ENCODE measurements at regions of chr6 and their contacts with region 1.

Region 1: DNA sequence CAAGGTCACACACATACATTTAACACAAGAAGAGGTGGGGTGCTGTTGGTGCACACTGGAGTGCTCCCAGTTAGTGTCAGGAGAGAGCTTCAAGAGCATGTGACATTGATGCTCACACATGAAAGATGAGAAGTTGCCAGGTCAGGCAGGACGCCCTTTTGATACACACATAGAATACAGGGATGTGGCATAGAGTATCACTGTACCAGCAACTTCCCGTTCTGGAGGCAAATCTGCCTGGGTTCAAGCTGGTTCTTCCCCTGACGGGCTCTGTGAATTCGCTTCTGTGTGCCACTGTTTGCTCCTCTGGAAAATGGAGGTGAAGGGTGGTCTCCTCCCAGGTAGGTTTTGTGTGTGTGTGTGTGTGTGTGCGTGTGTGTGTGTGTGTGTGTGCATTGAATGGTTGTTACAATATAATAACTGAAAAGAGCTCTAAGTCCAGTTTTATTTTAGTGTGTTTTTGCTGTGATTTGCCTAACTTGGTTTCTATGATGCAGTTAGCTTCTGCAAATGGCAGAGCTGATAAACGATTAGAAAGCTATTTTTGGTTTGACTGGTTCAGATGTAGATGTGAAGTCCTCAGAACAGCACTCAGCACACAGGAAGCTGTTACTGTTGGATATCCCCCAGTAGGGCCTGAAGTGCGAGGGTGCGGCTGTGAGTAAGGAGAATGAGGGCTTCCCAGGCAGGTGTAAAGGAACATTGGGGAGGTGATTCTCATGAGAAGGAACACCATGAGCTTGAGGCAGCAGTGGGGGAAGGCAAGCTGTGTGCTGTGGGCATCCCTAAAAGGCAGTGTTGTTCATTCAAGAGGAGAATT is 53.4 kb downstream of the HIVEP1 start:
- DNase-seq: no peak
- ATAC-seq: peak; percentile 27
- H3K4me3 Mint-ChIP-seq: no peak overlapping the region
- H3K27ac Mint-ChIP-seq: peak overlapping the region; percentile 68
- H3K4me1 Mint-ChIP-seq: peaks cover 47% of the 10 kb centered on the region
- H3K27me3 Mint-ChIP-seq: no peaks in the 10 kb centered on the region

Region 2: GRCh38 chr6:12011276-12012076 is 54.1 kb before region 1 on chr6:
- CTCF ChIA-PET with region 1: no interaction called
- DNase-seq: peak; percentile 98
- ATAC-seq: peak; percentile 79
- H3K4me3 Mint-ChIP-seq: peak overlapping the region; percentile 88
- H3K27ac Mint-ChIP-seq: peak overlapping the region; percentile 99
- H3K4me1 Mint-ChIP-seq: peaks cover 42% of the 10 kb centered on the region
- H3K27me3 Mint-ChIP-seq: no peaks in the 10 kb centered on the region

Region 3: DNA sequence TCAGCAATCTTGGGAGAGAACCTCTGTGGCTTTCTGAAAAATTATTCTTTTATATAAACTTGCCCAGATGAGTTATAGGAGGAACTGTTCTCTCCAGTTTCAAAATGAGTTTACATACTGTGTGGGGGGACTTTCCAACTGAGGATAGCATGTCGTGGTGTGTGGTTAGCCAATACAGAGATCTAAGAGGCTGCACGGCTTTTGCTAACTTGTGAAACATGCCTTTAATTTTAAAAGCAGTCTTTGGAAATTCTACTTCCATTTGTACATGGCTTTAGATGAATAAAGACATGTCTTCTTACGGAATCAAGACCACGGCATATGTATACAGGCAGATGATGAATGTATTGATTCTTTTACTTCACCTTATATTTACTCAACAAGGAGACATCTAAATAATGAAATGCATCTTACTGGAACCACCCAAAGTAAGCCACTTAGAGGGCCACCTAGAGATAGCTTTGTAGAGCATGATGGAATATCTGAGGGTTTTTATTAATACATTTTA is 13.6 kb before region 1 on chr6:
- CTCF ChIA-PET with region 1: interaction called, 10 read pairs
- DNase-seq: peak; percentile 89
- ATAC-seq: peak; percentile 97
- H3K4me3 Mint-ChIP-seq: peak overlapping the region; percentile 65
- H3K27ac Mint-ChIP-seq: peak overlapping the region; percentile 92
- H3K4me1 Mint-ChIP-seq: peaks cover 64% of the 10 kb centered on the region
- H3K27me3 Mint-ChIP-seq: no peaks in the 10 kb centered on the region

Region 4: GRCh38 chr6:13508711-13509705 is 1443.5 kb after region 1 on chr6:
- CTCF ChIA-PET with region 1: no interaction called
- DNase-seq: no peak
- ATAC-seq: no peak
- H3K4me3 Mint-ChIP-seq: no peak overlapping the region
- H3K27ac Mint-ChIP-seq: no peak overlapping the region
- H3K4me1 Mint-ChIP-seq: peaks cover 2% of the 10 kb centered on the region
- H3K27me3 Mint-ChIP-seq: peaks cover 10% of the 10 kb centered on the region